Dendritic cell treated with granulocyte-macrophage colony-stimulating factor and Interleukin-4, amounts not matched to agents 40 ng/mL and 50 ng/mL, for 4 days (primary cell): ENCODE measurements at regions of chr3 and their contacts with region 1.

Region 1: GRCh38 chr3:18758047-18758704 is 333.0 kb upstream of the SATB1 start:
- H3K4me3 Mint-ChIP-seq: no peak overlapping the region
- H3K27ac Mint-ChIP-seq: no peak overlapping the region
- H3K4me1 Mint-ChIP-seq: no peaks in the 10 kb centered on the region
- H3K27me3 Mint-ChIP-seq: no peaks in the 10 kb centered on the region

Region 2: DNA sequence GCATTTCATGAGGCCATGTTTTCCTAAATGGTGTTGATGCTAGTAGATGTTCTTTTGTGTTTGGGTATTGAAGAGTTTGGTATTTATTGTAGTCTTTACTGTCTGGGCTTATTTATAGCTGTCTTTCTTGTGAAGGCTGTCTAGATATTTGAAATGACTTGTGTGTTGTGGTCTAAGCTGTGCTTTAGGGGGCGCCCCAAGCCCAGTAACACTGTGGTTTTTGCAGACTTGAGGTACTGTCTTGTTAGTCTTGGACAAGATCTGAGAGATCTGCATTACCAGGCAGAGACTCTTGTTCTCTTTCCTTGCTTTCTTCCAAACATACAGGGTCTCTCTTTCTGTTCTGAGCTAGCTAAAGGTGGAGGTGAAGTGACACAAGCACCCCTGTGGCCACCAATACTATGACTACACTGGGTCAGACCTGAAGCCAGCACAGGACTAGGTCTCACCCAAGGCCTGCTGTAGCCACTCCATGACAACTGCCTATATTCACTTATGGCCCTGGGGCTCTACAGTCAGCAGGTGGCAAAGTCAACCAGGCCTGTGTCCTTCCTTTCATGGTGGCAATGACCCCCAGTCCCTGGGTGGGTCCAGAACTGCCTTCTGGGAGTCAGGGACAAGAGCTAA is 863.6 kb before region 1 on chr3:
- intact Hi-C with region 1: loop called (anchors 5 kb)
- H3K4me3 Mint-ChIP-seq: no peak overlapping the region
- H3K27ac Mint-ChIP-seq: no peak overlapping the region
- H3K4me1 Mint-ChIP-seq: no peaks in the 10 kb centered on the region
- H3K27me3 Mint-ChIP-seq: no peaks in the 10 kb centered on the region

Region 3: GRCh38 chr3:18454766-18455165 is 303.4 kb before region 1 on chr3:
- intact Hi-C with region 1: loop called (anchors 5 kb)
- H3K4me3 Mint-ChIP-seq: no peak overlapping the region
- H3K27ac Mint-ChIP-seq: no peak overlapping the region
- H3K4me1 Mint-ChIP-seq: no peaks in the 10 kb centered on the region
- H3K27me3 Mint-ChIP-seq: no peaks in the 10 kb centered on the region

Region 4: GRCh38 chr3:18559331-18559842 is 198.8 kb before region 1 on chr3:
- intact Hi-C with region 1: loop called (anchors 1 kb)
- H3K4me3 Mint-ChIP-seq: no peak overlapping the region
- H3K27ac Mint-ChIP-seq: peak overlapping the region; percentile 3
- H3K4me1 Mint-ChIP-seq: peaks cover 19% of the 10 kb centered on the region
- H3K27me3 Mint-ChIP-seq: no peaks in the 10 kb centered on the region